Prostate gland (tissue), 2 donors: ENCODE measurements at regions of chr4 and their contacts with region 1.

Region 1: GRCh38 chr4:139554893-139555704 is 920 bp downstream of the SETD7 start:
- DNase-seq: peak; percentile 93
- H3K4me3 ChIP-seq: peak overlapping the region; percentile 78 to 96
- H3K27ac ChIP-seq: peak overlapping the region; percentile 95 to 98
- H3K4me1 ChIP-seq: no peaks in the 10 kb centered on the region
- H3K27me3 ChIP-seq: no peaks in the 10 kb centered on the region
- CTCF ChIP-seq: no peak
- POLR2A ChIP-seq: peak; percentile 81

Region 2: DNA sequence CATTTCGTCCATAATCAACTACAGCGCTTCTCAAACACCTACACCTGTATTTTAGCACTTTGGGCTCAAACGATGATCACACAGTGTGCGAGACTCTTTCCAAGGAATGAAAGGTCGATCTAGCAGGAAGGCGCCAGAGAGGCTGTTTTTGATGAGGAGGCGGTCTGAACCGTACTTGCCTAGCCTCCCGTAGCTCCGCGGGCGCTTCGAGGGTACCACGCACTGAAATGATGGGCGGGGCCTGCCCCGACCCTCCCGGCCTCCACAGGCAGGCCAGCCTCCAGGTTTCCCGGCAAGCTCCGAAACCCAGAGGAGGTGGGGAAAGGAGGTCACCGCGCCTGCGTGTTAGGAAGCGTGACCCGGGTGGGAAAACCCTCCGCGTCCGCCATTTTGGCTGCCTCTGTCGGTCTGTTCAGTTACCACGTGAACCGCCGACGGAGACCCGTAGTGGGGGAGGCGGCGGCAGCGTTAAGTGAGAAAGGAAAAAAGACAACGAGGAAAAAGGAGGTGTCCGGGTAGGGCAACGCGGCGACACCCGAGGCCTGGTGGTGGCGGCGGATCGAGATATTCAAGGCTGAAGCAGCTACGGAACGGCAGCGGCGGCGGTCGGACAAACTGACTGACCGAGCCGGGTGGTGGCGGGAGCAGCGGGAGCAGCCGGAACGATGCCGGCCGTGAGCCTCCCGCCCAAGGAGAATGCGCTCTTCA is 253.8 kb before region 1 on chr4 and contains the start of gene NAA15:
- intact Hi-C with region 1: loop called (anchors 10 kb)
- DNase-seq: peak; percentile 96
- H3K4me3 ChIP-seq: peak within 1 kb of the TSS; percentile 92 to 93
- H3K27ac ChIP-seq: peak within 1 kb of the TSS; percentile 81 to 89
- H3K4me1 ChIP-seq: peaks cover 5% of the 10 kb centered on the region
- H3K27me3 ChIP-seq: no peaks in the 10 kb centered on the region
- CTCF ChIP-seq: peak in 2 of 4 experiments; percentile 8 to 11
- POLR2A ChIP-seq: peak; percentile 88
- total RNA-seq, gene NAA15: 19.3 to 22.9 TPM

Region 3: DNA sequence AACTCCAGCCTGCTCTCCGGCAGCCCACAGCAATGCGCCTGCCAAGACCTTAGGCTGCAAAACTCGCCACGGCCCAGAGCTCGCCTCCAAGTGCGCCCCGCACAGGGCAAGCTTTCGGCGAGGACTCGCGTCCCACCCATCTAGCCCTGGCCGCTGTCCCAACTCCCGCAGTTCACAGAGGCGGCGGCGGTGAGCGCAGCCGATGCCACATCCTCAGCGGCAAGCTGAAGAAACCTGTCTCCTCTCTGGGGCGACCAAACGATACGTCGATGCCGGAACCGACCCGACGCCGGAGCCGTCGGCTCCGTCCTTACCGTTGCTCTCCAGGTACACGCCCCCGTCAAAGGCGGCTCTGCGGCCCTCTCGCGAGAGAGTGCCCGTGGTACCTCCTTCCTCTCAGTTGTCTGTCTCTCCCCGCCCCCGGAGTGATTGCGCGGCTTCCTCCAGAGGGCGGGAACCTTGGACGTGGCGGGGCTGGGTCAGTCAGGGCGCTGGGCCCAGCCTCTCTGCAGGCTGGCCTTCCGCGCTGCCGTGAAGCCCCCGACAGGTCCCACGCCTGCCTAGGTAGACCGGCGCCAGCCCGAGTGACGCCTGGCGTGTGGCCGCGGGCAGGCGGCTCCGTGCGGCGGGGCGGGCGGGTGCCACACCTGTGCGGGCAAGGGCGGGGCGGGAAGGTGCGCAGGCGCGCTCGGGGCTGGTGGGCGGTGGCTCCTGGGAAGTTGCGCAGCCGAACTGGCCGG is 101.6 kb before region 1 on chr4:
- intact Hi-C with region 1: loop called (anchors 5 kb)
- DNase-seq: peak; percentile 97
- H3K4me3 ChIP-seq: peak overlapping the region; percentile 64 to 81
- H3K27ac ChIP-seq: peak overlapping the region; percentile 97 to 98
- H3K4me1 ChIP-seq: peaks cover 4% of the 10 kb centered on the region
- H3K27me3 ChIP-seq: no peaks in the 10 kb centered on the region
- CTCF ChIP-seq: peak in 1 of 4 experiments; percentile 32
- POLR2A ChIP-seq: peak; percentile 89